CD4-positive, alpha-beta T cell (primary cell): ENCODE measurements at regions of chr22 and their contacts with region 1.

Region 1: DNA sequence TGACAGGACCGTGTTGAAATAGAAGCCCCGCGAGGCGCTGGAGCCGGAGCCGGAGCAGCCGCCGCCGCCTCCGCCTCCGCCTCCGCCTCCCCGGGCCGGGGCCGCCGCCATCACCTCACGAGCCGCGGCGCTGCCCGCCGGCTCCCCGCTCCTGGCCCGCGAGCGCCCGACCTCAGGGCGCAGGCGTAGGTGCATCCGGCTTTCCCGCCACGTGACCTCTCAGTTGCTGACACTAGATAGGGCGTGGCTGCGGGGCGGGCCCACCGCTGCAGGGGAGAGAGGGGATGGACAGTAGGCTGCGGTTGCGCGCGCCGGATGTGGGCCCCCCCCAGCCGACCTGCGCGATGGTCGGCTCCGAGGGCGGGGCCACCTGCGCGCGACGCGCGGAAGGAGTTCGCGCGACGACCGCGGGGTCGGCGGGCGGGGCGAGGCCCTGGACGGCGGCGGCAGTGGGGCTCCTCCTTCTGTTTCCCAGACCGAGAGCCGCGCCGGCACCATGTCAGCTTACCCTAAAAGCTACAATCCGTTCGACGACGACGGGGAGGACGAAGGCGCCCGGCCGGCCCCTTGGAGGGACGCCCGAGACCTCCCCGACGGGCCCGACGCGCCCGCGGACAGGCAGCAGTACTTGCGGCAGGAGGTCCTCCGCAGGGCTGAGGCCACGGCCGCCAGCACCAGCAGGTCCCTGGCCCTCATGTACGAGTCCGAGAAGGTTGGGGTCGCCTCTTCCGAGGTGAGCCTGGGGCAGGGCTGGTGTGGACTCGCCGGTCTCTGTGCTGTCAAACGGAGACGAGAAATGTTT is at the starts of genes PI4KA and SNAP29:
- DNase-seq: peak; percentile 92 to 99 (median 98)
- ATAC-seq: peak; percentile 88
- H3K4me3 ChIP-seq: peak within 1 kb of the TSS; percentile 82
- H3K4me3 Mint-ChIP-seq: peak within 1 kb of the TSS; percentile 96
- H3K27ac ChIP-seq: peak within 1 kb of the TSS; percentile 78 to 83
- H3K27ac Mint-ChIP-seq: peak within 1 kb of the TSS; percentile 91
- H3K4me1 ChIP-seq: peaks cover 55% of the 10 kb centered on the region
- H3K4me1 Mint-ChIP-seq: peaks cover 60% of the 10 kb centered on the region
- H3K27me3 ChIP-seq: no peaks in the 10 kb centered on the region
- H3K27me3 Mint-ChIP-seq: no peaks in the 10 kb centered on the region
- CTCF ChIP-seq: peak; percentile 11
- total RNA-seq, gene PI4KA: 137 to 146 TPM
- total RNA-seq, gene SNAP29: 13.7 to 15.1 TPM

Region 2: DNA sequence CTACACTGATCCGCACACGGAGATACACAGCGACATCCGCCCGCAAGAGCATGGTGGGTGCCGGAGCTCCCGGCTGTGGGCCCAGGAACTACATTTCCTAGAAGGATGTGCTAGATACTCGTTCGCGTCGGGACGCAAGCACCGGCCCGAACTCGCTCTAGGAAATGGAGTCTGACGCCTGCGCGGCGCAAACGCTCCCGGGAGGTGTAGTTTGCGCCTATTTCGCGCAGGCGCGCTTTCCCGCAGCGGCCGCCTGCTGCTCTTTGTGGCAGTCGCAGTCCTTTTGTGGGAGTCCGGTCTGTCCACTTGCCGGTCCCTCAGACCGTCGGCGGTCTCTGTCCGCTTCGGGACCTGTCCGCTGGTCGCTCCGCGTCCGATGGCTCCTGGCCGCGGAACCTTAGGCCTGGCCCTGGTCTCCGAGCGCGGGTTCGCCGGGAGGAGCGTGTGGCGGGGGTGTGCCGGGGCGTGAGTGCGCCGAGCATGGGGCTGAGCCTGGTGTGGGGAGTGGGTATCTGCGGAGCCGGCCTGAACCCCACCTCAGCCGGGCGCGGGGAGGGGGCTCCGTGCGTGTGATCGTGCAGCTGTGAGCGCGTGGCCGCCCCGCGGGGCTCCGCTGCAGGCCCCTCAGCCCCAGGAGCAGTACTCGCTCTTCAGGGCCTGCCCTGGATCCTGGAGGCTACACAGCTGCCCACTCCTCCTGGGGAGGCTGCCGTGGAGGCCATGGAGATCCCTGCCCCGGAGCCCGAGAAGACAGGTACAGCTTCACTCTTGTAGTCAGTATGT is 464.7 kb before region 1 on chr22 and contains the start of gene ZNF74:
- CTCF ChIA-PET with region 1: no interaction called
- POLR2A ChIA-PET with region 1: no interaction called
- intact Hi-C with region 1: loop called in 1 of 2 experiments (anchors 5 kb)
- DNase-seq: peak; percentile 70 to 96 (median 83)
- ATAC-seq: peak; percentile 97
- H3K4me3 ChIP-seq: peak within 1 kb of the TSS; percentile 75
- H3K4me3 Mint-ChIP-seq: peak within 1 kb of the TSS; percentile 86
- H3K27ac ChIP-seq: peak within 1 kb of the TSS; percentile 26 to 64
- H3K27ac Mint-ChIP-seq: peak within 1 kb of the TSS; percentile 86
- H3K4me1 ChIP-seq: peaks cover 28% of the 10 kb centered on the region
- H3K4me1 Mint-ChIP-seq: peaks cover 30% of the 10 kb centered on the region
- H3K27me3 ChIP-seq: no peaks in the 10 kb centered on the region
- H3K27me3 Mint-ChIP-seq: no peaks in the 10 kb centered on the region
- CTCF ChIP-seq: no peak
- total RNA-seq, gene ZNF74: 1.7 to 2.3 TPM

Region 3: GRCh38 chr22:20807315-20807752 is 51.5 kb before region 1 on chr22:
- CTCF ChIA-PET with region 1: interaction called, 3 read pairs
- POLR2A ChIA-PET with region 1: no interaction called
- intact Hi-C with region 1: loop called in 1 of 2 experiments (anchors 2 kb)
- DNase-seq: no peak
- ATAC-seq: no peak
- H3K4me3 ChIP-seq: no peak overlapping the region
- H3K4me3 Mint-ChIP-seq: no peak overlapping the region
- H3K27ac ChIP-seq: no peak overlapping the region
- H3K27ac Mint-ChIP-seq: no peak overlapping the region
- H3K4me1 ChIP-seq: no peaks in the 10 kb centered on the region
- H3K4me1 Mint-ChIP-seq: peaks cover 13% of the 10 kb centered on the region
- H3K27me3 ChIP-seq: no peaks in the 10 kb centered on the region
- H3K27me3 Mint-ChIP-seq: no peaks in the 10 kb centered on the region
- CTCF ChIP-seq: no peak

Region 4: DNA sequence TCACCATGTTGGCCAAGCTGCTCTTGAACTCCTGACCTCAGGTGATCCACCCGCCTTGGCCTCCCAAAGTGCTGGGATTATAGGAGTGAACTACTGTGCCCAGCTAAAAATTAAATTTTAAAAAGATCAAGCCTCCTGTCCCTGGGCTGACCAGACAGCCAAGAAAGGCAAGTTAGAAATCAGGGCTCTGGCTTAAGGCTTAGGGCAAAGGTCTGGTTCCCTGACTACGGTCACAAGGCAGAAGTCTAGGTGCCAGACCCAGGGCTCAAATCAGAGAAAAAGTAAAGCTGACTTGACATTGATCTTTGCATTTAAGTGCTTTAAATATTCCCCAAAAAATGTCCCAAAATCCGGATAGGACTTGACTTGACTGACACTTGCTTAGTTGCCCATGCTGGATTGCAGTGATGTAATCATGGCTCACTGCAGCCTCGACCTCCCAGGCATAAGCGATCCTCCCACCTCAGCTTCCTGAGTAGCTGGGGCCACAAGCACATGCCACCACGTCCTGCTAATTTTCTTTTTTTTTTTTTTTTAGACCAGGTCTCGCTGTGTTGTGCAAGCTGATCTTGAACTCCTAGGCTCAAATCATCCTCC is 41.1 kb after region 1 on chr22:
- CTCF ChIA-PET with region 1: no interaction called
- POLR2A ChIA-PET with region 1: no interaction called
- intact Hi-C with region 1: no loop called
- DNase-seq: no peak
- ATAC-seq: no peak
- H3K4me3 ChIP-seq: no peak overlapping the region
- H3K4me3 Mint-ChIP-seq: no peak overlapping the region
- H3K27ac ChIP-seq: no peak overlapping the region
- H3K27ac Mint-ChIP-seq: no peak overlapping the region
- H3K4me1 ChIP-seq: no peaks in the 10 kb centered on the region
- H3K4me1 Mint-ChIP-seq: no peaks in the 10 kb centered on the region
- H3K27me3 ChIP-seq: no peaks in the 10 kb centered on the region
- H3K27me3 Mint-ChIP-seq: peaks cover 4% of the 10 kb centered on the region
- CTCF ChIP-seq: no peak

Region 5: GRCh38 chr22:20916983-20917810 is 58.4 kb after region 1 on chr22 and contains the start of gene CRKL:
- CTCF ChIA-PET with region 1: interaction called, 5 read pairs
- POLR2A ChIA-PET with region 1: no interaction called
- intact Hi-C with region 1: loop called (anchors 1 kb)
- DNase-seq: peak; percentile 90 to 99 (median 95)
- ATAC-seq: peak; percentile 96
- H3K4me3 ChIP-seq: peak within 1 kb of the TSS; percentile 99
- H3K4me3 Mint-ChIP-seq: peak within 1 kb of the TSS; percentile 98
- H3K27ac ChIP-seq: peak within 1 kb of the TSS; percentile 71 to 84
- H3K27ac Mint-ChIP-seq: peak within 1 kb of the TSS; percentile 90
- H3K4me1 ChIP-seq: peaks cover 32% of the 10 kb centered on the region
- H3K4me1 Mint-ChIP-seq: peaks cover 49% of the 10 kb centered on the region
- H3K27me3 ChIP-seq: no peaks in the 10 kb centered on the region
- H3K27me3 Mint-ChIP-seq: no peaks in the 10 kb centered on the region
- CTCF ChIP-seq: peak; percentile 97
- total RNA-seq, gene CRKL: 41.9 to 43.5 TPM

Region 6: DNA sequence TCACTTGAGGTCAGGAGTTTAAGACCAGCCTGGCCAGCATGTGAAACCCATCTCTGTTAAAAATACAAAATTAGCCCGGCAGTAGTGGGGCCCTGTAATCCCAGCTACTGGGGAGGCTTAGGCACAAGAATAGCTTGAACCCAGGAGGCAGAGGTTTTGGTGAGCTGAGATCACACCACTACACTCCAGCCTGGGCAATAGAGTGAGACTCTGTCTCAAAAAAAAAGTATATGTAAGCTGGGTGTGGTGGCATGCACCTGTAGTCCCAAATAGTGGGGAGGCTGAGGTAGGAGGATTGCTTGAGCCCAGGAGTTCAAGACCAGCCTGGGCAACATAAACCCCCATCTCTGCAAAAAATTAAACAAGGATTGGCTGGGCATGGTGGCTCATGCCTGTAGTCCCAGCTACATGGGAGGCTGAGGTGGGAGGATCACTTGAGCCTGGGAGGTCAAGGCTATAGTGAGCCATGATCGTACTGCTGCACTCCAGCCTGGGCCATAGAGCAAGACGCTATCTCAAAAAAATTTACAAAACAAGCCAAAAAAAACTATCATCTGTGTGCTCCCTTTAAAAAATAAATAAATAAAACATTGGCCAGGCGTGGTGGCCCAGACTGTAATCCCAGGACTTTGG is 69.2 kb after region 1 on chr22:
- CTCF ChIA-PET with region 1: no interaction called
- POLR2A ChIA-PET with region 1: no interaction called
- intact Hi-C with region 1: no loop called
- DNase-seq: no peak
- ATAC-seq: no peak
- H3K4me3 ChIP-seq: no peak overlapping the region
- H3K4me3 Mint-ChIP-seq: no peak overlapping the region
- H3K27ac ChIP-seq: no peak overlapping the region
- H3K27ac Mint-ChIP-seq: no peak overlapping the region
- H3K4me1 ChIP-seq: peaks cover 58% of the 10 kb centered on the region
- H3K4me1 Mint-ChIP-seq: peaks cover 64% of the 10 kb centered on the region
- H3K27me3 ChIP-seq: no peaks in the 10 kb centered on the region
- H3K27me3 Mint-ChIP-seq: no peaks in the 10 kb centered on the region
- CTCF ChIP-seq: no peak

Region 7: DNA sequence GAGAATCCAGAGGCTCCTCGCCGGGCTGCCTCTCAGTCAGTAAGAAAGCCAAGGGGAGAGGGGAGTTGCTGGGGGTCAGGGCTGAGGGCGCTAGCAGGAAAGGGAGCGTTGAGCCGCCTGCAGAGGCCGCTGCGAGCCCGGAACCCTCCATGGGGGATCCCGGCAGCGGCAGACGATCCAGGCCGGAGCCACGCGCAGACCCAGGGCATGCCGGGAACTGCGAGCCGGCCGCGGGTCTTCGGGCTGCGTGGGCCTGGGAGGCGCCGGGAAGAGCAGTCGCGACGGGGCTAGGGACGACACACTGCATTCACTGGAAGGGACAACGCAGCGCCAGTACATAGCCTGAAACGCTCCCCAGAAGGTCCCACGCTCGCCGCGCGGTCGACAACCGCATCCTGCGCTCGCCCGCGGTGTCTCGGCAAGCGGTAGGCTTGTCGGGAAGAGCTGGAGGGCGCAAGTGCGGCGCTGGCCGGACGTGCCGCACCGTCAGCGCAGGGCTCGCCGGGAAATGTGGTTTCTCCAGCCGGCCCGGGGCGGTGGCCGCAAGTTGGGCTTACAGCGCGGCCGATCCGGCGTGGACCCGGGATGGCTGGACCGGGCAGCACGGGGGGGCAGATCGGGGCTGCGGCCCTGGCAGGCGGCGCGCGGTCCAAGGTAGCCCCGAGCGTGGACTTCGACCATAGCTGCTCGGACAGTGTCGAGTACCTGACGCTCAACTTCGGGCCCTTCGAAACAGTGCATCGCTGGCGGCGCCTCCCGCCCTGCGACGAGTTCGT is 123.2 kb after region 1 on chr22 and contains the start of gene LZTR1:
- CTCF ChIA-PET with region 1: no interaction called
- POLR2A ChIA-PET with region 1: no interaction called
- intact Hi-C with region 1: loop called in 1 of 2 experiments (anchors 10 kb)
- DNase-seq: peak; percentile 40 to 85 (median 66)
- ATAC-seq: peak; percentile 58
- H3K4me3 ChIP-seq: peak within 1 kb of the TSS; percentile 76
- H3K4me3 Mint-ChIP-seq: peak within 1 kb of the TSS; percentile 97
- H3K27ac ChIP-seq: peak within 1 kb of the TSS; percentile 69 to 80
- H3K27ac Mint-ChIP-seq: peak within 1 kb of the TSS; percentile 87
- H3K4me1 ChIP-seq: peaks cover 49% of the 10 kb centered on the region
- H3K4me1 Mint-ChIP-seq: peaks cover 48% of the 10 kb centered on the region
- H3K27me3 ChIP-seq: no peaks in the 10 kb centered on the region
- H3K27me3 Mint-ChIP-seq: no peaks in the 10 kb centered on the region
- CTCF ChIP-seq: peak; percentile 52
- total RNA-seq, gene LZTR1: 48.4 to 51.3 TPM

Region 8: DNA sequence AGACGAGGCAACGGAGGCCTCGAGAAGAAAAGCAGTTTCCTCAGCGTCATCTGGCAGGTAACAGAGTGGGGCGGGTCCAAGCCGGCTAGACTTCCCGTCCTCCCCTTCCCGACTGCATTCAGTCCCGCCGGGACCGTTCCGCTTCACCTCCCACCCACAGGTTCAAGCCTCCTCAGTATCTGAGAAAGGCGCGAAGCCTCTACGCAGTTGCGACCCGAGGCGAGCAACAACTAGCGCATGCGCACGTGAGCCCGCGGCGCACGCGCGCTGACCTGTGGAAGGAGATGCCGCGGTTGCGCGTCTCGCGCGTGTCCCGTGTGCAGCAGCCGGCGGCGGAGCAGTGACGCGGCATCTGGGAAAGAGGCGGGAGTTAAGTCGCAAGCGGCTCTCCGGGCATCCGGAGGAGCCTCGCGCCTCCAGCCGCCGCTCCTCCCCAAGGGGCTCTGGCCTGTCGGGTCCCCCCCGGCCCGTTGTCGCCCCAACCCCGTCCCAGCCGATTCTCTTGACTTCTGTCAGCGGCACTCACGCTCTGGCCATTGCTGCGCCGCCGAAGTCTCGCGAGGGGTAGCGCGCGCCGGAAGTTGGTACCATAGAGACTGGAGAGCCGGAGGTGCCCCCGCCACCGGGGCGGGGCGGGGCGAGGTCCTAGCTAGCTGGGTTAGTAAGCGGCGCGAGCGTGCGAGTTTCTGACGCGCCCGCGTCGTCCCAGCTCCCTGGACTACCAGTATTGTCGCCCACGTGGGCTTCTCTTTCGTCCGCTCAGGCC is 142.9 kb after region 1 on chr22 and contains the start of gene THAP7:
- CTCF ChIA-PET with region 1: no interaction called
- POLR2A ChIA-PET with region 1: interaction called, 4 read pairs
- intact Hi-C with region 1: loop called in 1 of 2 experiments (anchors 5 kb)
- DNase-seq: peak; percentile 94 to 99 (median 96)
- ATAC-seq: peak; percentile 87
- H3K4me3 ChIP-seq: peak within 1 kb of the TSS; percentile 82
- H3K4me3 Mint-ChIP-seq: peak within 1 kb of the TSS; percentile 93
- H3K27ac ChIP-seq: peak within 1 kb of the TSS; percentile 96 to 100
- H3K27ac Mint-ChIP-seq: peak within 1 kb of the TSS; percentile 97
- H3K4me1 ChIP-seq: peaks cover 54% of the 10 kb centered on the region
- H3K4me1 Mint-ChIP-seq: peaks cover 46% of the 10 kb centered on the region
- H3K27me3 ChIP-seq: no peaks in the 10 kb centered on the region
- H3K27me3 Mint-ChIP-seq: no peaks in the 10 kb centered on the region
- CTCF ChIP-seq: no peak
- total RNA-seq, gene THAP7: 82.7 to 84.0 TPM

Region 9: DNA sequence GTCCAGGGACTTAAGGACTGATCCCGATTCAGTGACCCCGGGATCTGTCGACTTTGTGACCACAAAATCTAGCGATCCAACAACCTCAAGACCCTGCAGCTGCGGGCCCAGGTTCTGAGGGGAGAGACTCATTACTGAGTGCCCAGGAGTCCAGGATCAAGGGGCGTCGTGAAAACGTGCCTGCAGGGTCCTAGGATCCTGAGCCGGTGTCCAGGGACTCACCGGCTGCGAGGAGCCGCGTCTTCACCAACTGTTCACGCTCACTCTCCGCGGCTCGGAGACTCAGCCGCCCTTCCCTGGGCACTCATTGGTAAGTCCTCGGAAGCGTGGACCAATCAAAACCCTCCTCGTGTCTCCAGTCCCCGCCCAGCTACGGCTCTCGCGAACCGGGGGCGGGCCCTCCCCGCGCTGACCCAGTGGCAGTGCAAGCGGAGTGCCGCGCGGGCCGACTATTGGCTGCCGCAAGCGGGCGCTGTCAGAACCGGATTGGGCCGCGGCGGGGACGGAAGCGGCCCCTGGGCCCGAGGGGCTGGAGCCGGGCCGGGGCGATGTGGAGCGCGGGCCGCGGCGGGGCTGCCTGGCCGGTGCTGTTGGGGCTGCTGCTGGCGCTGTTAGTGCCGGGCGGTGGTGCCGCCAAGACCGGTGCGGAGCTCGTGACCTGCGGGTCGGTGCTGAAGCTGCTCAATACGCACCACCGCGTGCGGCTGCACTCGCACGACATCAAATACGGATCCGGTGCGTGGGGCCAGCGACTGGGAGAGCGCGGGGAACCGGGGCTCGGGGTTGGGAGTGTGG is 783.2 kb after region 1 on chr22 and contains the start of gene SDF2L1:
- CTCF ChIA-PET with region 1: no interaction called
- POLR2A ChIA-PET with region 1: no interaction called
- intact Hi-C with region 1: loop called in 1 of 2 experiments (anchors 10 kb)
- DNase-seq: peak; percentile 94 to 99 (median 97)
- ATAC-seq: peak; percentile 96
- H3K4me3 ChIP-seq: peak within 1 kb of the TSS; percentile 87
- H3K4me3 Mint-ChIP-seq: peak within 1 kb of the TSS; percentile 73
- H3K27ac ChIP-seq: peak within 1 kb of the TSS; percentile 52 to 67
- H3K27ac Mint-ChIP-seq: peak within 1 kb of the TSS; percentile 42
- H3K4me1 ChIP-seq: peaks cover 32% of the 10 kb centered on the region
- H3K4me1 Mint-ChIP-seq: peaks cover 32% of the 10 kb centered on the region
- H3K27me3 ChIP-seq: no peaks in the 10 kb centered on the region
- H3K27me3 Mint-ChIP-seq: no peaks in the 10 kb centered on the region
- CTCF ChIP-seq: no peak
- total RNA-seq, gene SDF2L1: 20.0 to 21.2 TPM